ENCODE measurements at regions of chr17 and their contacts with region 1.

Region 1: DNA sequence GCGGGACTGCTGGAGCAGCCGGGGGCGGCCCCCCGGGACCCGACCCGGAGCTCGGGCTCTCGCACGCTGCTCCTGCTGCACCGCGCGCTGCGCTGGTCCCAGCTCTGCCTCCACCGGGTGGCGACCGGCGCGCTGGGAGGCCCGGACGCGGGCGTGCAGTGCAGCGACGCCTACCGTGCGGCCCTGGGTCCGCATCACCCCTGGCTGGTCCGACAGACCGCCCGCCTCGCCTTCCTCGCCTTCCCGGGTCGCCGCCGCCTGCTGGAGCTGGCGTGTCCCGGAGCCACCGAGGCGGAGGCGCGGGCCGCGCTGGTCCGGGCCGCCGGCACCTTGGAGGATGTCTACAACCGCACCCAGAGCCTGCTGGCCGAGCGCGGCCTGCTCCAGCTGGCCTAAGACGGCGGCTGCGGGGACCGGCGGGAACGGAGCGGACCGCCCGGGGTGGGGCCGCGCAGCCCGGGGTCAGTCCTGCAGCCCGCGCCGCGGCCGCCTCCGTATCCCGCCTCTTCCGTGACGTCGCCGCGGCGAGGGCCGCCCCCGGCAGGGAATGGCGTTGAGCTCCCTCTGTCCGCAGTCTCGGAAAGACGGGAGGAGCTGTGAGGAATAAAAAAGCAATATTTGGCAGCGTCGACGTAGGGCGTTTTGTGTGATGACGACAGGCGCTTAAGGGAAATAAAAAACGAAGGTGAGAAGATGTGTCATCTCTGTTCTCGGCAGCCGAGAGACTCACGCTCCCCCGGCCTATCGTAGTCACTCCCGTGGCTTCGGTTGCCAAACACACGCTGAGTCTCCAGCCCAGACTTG is 1.3 kb downstream of the GLTPD2 start:
- DNase-seq: peak; percentile 93
- ATAC-seq: peak; percentile 95
- H3K4me3 ChIP-seq: peak overlapping the region; percentile 64
- H3K27ac ChIP-seq: peak overlapping the region; percentile 72
- H3K4me1 ChIP-seq: peaks cover 5% of the 10 kb centered on the region; the same call in 1 of the 2 replicates
- H3K27me3 ChIP-seq: peaks cover 15% of the 10 kb centered on the region
- CTCF ChIP-seq: peak; percentile 90
- POLR2A ChIP-seq: peak; percentile 49; the same call in 1 of the 2 replicates
- RAD21 ChIP-seq: peak; percentile 53

Region 2: GRCh38 chr17:4709794-4710692 is 80.1 kb before region 1 on chr17 and contains the start of gene ARRB2:
- CTCF ChIA-PET with region 1: no interaction called
- POLR2A ChIA-PET with region 1: no interaction called
- dilution Hi-C with region 1: no loop called
- in situ Hi-C with region 1: no loop called
- intact Hi-C with region 1: loop called (anchors 1 kb)
- DNase-seq: peak; percentile 98
- ATAC-seq: peak; percentile 96
- H3K4me3 ChIP-seq: peak within 1 kb of the TSS; percentile 49
- H3K27ac ChIP-seq: no peak within 1 kb of the TSS; the same call in 1 of the 2 replicates
- H3K4me1 ChIP-seq: peaks cover 9% of the 10 kb centered on the region
- H3K27me3 ChIP-seq: no peaks in the 10 kb centered on the region
- CTCF ChIP-seq: peak; percentile 77
- POLR2A ChIP-seq: no peak
- RAD21 ChIP-seq: peak; percentile 80
- total RNA-seq, gene ARRB2: 3.9 and 6.1 TPM in 2 replicates

Region 3: GRCh38 chr17:4891411-4892342 is 101.6 kb after region 1 on chr17:
- CTCF ChIA-PET with region 1: interaction called, 5 read pairs
- POLR2A ChIA-PET with region 1: no interaction called
- dilution Hi-C with region 1: no loop called
- in situ Hi-C with region 1: no loop called
- intact Hi-C with region 1: loop called (anchors 1 kb)
- DNase-seq: no peak
- ATAC-seq: no peak
- H3K4me3 ChIP-seq: no peak overlapping the region
- H3K27ac ChIP-seq: no peak overlapping the region
- H3K4me1 ChIP-seq: no peaks in the 10 kb centered on the region
- H3K27me3 ChIP-seq: no peaks in the 10 kb centered on the region
- CTCF ChIP-seq: no peak
- POLR2A ChIP-seq: no peak
- RAD21 ChIP-seq: no peak

Region 4: DNA sequence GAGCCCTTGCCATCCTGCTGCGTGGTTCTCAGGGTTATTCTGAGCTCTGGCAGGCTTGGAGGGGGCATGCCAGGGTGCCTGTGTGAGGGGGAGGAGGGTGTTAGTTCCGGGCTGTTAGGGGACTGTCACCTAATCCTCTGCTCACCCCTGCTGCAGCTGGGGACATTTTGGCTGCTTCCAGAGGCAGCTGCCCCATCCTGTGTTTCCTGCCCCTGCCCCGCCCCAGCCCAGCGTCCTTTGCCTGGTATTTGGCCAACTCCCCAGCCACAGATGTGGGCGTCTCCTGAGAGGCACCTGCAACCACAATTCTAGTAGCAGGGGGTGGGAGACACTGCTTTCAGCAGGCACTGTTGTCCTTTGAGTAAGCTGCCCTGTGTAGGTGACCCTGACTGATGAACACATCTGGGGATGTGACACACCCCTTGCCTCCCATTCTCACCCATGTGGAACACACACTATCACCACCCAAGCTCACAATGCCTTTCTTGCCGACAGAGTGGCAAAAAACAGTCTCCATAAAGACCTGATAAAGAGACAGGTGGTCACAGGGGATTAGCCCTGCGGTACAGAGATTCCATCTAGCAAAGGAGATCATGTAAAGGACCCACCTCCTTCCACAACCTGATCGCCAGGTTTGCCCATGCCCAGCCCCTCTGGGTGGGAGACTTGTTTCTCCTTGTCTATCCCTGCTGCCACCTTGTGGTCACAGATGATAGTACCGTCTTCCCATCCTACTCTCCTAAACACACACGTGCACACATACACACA is 113.1 kb after region 1 on chr17 and contains the start of gene CHRNE:
- CTCF ChIA-PET with region 1: interaction called, 4 read pairs
- POLR2A ChIA-PET with region 1: no interaction called
- dilution Hi-C with region 1: no loop called
- in situ Hi-C with region 1: no loop called
- intact Hi-C with region 1: loop called (anchors 1 kb)
- DNase-seq: peak; percentile 79
- ATAC-seq: peak; percentile 73
- H3K4me3 ChIP-seq: no peak within 1 kb of the TSS
- H3K27ac ChIP-seq: no peak within 1 kb of the TSS
- H3K4me1 ChIP-seq: no peaks in the 10 kb centered on the region
- H3K27me3 ChIP-seq: peaks cover 2% of the 10 kb centered on the region; the same call in 1 of the 2 replicates
- CTCF ChIP-seq: peak; percentile 65
- POLR2A ChIP-seq: no peak
- RAD21 ChIP-seq: peak; percentile 50
- total RNA-seq, gene CHRNE: under 0.01 TPM in 2 replicates

Measured in IMR-90 (cell line).